AG04449 (cell line): ENCODE measurements at regions of chr16 and their contacts with region 1.

Region 1: GRCh38 chr16:85275533-85276249 is 163.4 kb upstream of the CIBAR2 start:
- DNase-seq: no peak
- H3K4me3 ChIP-seq: no peak overlapping the region
- CTCF ChIP-seq: peak; percentile 96

Region 2: GRCh38 chr16:85245307-85246172 is 30.2 kb before region 1 on chr16:
- CTCF ChIA-PET with region 1: interaction called, 77 read pairs
- POLR2A ChIA-PET with region 1: no interaction called
- DNase-seq: no peak
- H3K4me3 ChIP-seq: no peak overlapping the region
- CTCF ChIP-seq: peak; percentile 89

Region 3: GRCh38 chr16:85258629-85259028 is 17.1 kb before region 1 on chr16:
- CTCF ChIA-PET with region 1: interaction called, 77 read pairs
- POLR2A ChIA-PET with region 1: no interaction called
- DNase-seq: no peak
- H3K4me3 ChIP-seq: no peak overlapping the region
- CTCF ChIP-seq: no peak

Region 4: GRCh38 chr16:85286970-85287824 is 11.5 kb after region 1 on chr16:
- CTCF ChIA-PET with region 1: interaction called, 67 read pairs
- POLR2A ChIA-PET with region 1: no interaction called
- DNase-seq: no peak
- H3K4me3 ChIP-seq: peak overlapping the region; percentile 8; the same call in 1 of the 2 replicates
- CTCF ChIP-seq: peak; percentile 15

Region 5: DNA sequence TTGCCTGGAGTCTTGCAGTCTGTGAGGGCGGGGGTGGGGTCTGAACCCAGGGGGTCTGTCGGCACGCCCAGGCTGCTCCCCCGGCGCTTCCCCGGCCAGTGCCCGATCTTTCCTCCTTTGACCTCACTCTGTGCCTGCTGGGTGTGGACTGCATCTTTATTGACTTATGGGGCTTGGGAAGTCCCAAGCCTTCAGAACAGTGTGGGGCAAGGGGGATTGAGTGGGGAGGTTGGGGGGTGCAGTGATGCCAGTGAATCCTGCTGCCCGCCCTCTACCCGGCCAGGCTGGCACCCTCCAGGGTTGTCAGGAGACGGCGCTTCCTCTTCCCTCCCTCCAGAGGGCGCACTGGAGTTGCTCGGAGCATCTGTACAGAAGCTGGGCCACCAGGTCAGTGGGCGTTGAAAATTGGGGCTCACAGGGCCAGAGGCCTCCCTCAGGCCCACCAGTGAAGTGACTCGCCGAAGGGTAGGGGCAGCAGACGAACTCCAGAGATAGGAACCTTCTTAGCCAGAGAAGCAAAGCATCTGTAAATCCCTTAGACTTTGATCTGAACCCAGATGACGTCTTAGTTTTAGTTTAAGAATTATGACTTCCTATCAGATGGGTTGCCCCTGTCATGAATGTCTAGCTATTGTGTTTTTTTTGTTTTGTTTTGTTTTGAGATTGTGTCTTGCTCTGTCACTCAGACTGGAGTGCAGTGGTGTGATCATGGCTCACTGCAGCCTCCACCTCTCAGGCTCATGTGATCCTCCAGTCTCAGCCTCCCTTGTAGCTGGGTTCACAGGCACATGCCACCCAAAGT is 21.4 kb after region 1 on chr16:
- CTCF ChIA-PET with region 1: interaction called, 10 read pairs
- POLR2A ChIA-PET with region 1: no interaction called
- DNase-seq: no peak
- H3K4me3 ChIP-seq: no peak overlapping the region
- CTCF ChIP-seq: peak; percentile 88

Region 6: DNA sequence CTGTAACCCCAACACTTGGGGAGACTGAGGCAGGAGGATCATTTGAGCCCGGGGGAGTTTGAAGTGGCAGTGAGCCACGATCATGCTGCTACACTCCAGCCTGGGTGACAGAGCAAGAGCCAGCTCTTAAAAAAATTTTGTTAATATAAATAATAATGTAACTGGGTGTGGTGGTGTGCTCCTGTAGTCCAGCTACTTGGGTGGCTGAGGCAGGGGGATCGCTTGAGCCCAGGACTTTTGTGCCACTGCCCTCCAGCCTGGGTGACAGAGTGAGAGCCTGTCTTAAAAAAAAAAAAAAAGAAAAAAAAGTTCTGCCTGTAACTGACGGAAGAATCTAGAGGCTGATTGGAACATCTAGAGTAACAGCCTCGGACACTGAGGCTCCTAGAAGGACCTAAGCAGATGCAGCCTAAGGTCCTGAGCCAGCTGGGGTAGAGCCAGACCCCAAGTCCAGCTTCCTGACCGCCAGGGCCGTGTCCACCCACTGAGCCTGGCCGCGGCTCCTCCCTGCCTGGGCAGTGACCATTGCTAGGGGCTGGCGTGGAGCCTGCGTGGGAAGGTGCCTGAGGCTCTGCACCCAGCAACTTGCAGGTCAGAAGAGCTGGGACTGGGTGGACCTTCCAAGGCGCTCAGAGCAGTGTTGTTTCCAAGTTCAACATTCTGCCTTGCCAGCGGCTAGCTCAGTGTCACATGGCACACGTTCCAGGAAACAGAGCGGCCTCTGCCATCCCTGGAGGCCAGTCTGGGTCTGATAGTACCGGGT is 46.0 kb after region 1 on chr16:
- CTCF ChIA-PET with region 1: interaction called, 13 read pairs
- POLR2A ChIA-PET with region 1: no interaction called
- DNase-seq: no peak
- H3K4me3 ChIP-seq: no peak overlapping the region
- CTCF ChIP-seq: no peak